Activated CD4-positive, alpha-beta T cell treated with anti-CD3 and anti-CD28 coated beads, Interleukin-2, amount 10 ng/mL, durations not matched to agents 7 days and 5 days (primary cell): ENCODE measurements at regions of chr14 and their contacts with region 1.

Region 1: GRCh38 chr14:93970549-93970946 is 5.8 kb downstream of the ASB2 start:
- DNase-seq: peak; percentile 71
- H3K4me3 Mint-ChIP-seq: peak overlapping the region; percentile 79
- H3K27ac Mint-ChIP-seq: peak overlapping the region; percentile 98
- H3K4me1 Mint-ChIP-seq: peaks cover 89% of the 10 kb centered on the region
- H3K27me3 Mint-ChIP-seq: no peaks in the 10 kb centered on the region

Region 2: DNA sequence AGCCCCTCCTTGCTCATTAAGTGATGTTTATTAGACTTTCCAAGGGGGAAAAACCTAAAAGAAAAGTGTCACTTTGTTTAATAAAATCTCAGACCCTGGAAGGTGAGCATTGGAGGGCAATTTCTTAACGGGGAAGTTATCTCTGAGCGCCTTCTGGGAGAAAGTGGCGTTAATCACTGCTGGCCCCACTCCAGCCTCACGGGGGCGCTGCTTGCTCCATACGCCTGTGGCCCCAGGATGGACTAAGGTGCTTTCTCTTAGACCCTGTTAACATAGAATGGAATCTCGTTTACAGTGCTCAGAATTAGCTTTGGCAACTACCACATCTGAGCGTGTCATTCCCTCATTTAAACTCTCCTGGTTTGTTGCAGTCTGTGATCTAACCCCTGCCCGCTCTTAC is 165.9 kb before region 1 on chr14:
- CTCF ChIA-PET with region 1: no interaction called
- POLR2A ChIA-PET with region 1: no interaction called
- DNase-seq: no peak
- H3K4me3 Mint-ChIP-seq: no peak overlapping the region
- H3K27ac Mint-ChIP-seq: no peak overlapping the region
- H3K4me1 Mint-ChIP-seq: peaks cover 4% of the 10 kb centered on the region
- H3K27me3 Mint-ChIP-seq: no peaks in the 10 kb centered on the region

Region 3: GRCh38 chr14:93953263-93953662 is 17.3 kb before region 1 on chr14:
- CTCF ChIA-PET with region 1: interaction called, 173 read pairs
- POLR2A ChIA-PET with region 1: interaction called, 14 read pairs
- DNase-seq: no peak
- H3K4me3 Mint-ChIP-seq: no peak overlapping the region
- H3K27ac Mint-ChIP-seq: no peak overlapping the region
- H3K4me1 Mint-ChIP-seq: peaks cover 73% of the 10 kb centered on the region
- H3K27me3 Mint-ChIP-seq: no peaks in the 10 kb centered on the region

Region 4: GRCh38 chr14:93959239-93960107 is 11.1 kb before region 1 on chr14:
- CTCF ChIA-PET with region 1: interaction called, 173 read pairs
- POLR2A ChIA-PET with region 1: interaction called, 14 read pairs
- DNase-seq: peak; percentile 93
- H3K4me3 Mint-ChIP-seq: peak overlapping the region; percentile 51
- H3K27ac Mint-ChIP-seq: peak overlapping the region; percentile 90
- H3K4me1 Mint-ChIP-seq: peaks cover 97% of the 10 kb centered on the region
- H3K27me3 Mint-ChIP-seq: no peaks in the 10 kb centered on the region

Region 5: GRCh38 chr14:93984987-93985410 is 14.5 kb after region 1 on chr14:
- CTCF ChIA-PET with region 1: interaction called, 173 read pairs
- POLR2A ChIA-PET with region 1: no interaction called
- DNase-seq: no peak
- H3K4me3 Mint-ChIP-seq: no peak overlapping the region
- H3K27ac Mint-ChIP-seq: no peak overlapping the region
- H3K4me1 Mint-ChIP-seq: peaks cover 12% of the 10 kb centered on the region
- H3K27me3 Mint-ChIP-seq: no peaks in the 10 kb centered on the region

Region 6: GRCh38 chr14:94021001-94021400 is 50.5 kb after region 1 on chr14:
- CTCF ChIA-PET with region 1: interaction called, 12 read pairs
- POLR2A ChIA-PET with region 1: no interaction called
- DNase-seq: no peak
- H3K4me3 Mint-ChIP-seq: no peak overlapping the region
- H3K27ac Mint-ChIP-seq: no peak overlapping the region
- H3K4me1 Mint-ChIP-seq: peaks cover 44% of the 10 kb centered on the region
- H3K27me3 Mint-ChIP-seq: peaks cover 16% of the 10 kb centered on the region

Region 7: DNA sequence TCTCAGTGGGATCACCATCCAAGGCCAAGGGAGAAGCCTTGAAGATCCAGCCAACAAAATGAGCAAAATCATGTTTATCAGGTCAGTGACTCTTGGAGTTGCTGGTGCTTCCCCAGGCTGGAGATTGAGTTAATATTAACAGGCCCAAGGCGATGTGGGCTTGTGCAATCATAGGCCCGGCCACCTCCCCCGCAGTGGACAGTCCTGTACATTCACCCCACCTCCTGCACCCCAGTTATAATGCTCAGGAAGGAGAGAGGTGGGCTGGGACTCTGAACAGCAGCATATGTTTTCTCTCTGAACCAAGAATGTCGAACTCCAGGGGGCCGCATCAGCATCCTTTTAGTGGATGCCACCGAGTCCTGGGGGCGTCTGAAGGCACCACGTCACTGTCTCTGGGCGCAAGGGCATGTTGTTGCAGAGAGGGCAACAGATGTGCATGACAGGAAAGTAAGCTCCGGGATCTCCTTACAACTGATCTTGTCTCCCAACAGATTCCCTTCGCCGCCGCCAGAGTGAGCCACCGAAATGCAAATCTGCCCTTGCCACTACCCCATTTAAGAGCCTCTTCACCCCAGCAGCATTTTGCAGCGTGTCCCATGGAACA is 384.7 kb after region 1 on chr14:
- CTCF ChIA-PET with region 1: no interaction called
- POLR2A ChIA-PET with region 1: no interaction called
- DNase-seq: peak; percentile 9
- H3K4me3 Mint-ChIP-seq: no peak overlapping the region
- H3K27ac Mint-ChIP-seq: no peak overlapping the region
- H3K4me1 Mint-ChIP-seq: no peaks in the 10 kb centered on the region
- H3K27me3 Mint-ChIP-seq: peaks cover 13% of the 10 kb centered on the region